PC-9 (cell line): ENCODE measurements at regions of chr11 and their contacts with region 1.

Region 1: DNA sequence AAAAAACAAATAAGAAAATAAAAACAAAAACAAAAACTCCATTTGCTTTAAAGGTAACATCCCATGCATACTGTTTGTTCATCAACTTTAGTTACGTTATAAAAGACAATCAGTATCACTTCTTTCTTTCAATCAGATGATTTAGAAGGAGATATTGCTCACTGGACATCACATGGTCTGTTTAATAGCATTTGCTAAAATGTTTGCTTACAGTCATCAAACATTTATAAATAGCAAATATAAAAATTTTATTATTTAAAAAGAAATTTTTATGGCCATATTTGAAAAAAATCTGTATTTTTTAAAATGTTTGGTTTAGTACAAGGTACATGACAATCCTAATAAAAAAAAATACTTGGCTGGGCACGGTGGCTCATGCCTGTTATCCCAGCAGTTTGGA is 22.6 kb downstream of the MMP26 start:
- DNase-seq: no peak
- H3K4me3 ChIP-seq: no peak overlapping the region
- H3K27ac ChIP-seq: no peak overlapping the region
- H3K4me1 ChIP-seq: no peaks in the 10 kb centered on the region
- H3K27me3 ChIP-seq: 0 out of 2 replicates have a peak, but pooled peaks cover 5% of the 10 kb centered on the region
- CTCF ChIP-seq: no peak

Region 2: GRCh38 chr11:4643076-4643475 is 84.1 kb before region 1 on chr11:
- CTCF ChIA-PET with region 1: no interaction called
- POLR2A ChIA-PET with region 1: no interaction called
- intact Hi-C with region 1: no loop called
- DNase-seq: no peak
- H3K4me3 ChIP-seq: no peak overlapping the region
- H3K27ac ChIP-seq: no peak overlapping the region
- H3K4me1 ChIP-seq: no peaks in the 10 kb centered on the region
- H3K27me3 ChIP-seq: peaks cover 14% of the 10 kb centered on the region
- CTCF ChIP-seq: no peak

Region 3: GRCh38 chr11:4763096-4763495 is 35.9 kb after region 1 on chr11:
- CTCF ChIA-PET with region 1: no interaction called
- POLR2A ChIA-PET with region 1: interaction called, 11 read pairs
- intact Hi-C with region 1: no loop called
- DNase-seq: no peak
- H3K4me3 ChIP-seq: no peak overlapping the region
- H3K27ac ChIP-seq: no peak overlapping the region
- H3K4me1 ChIP-seq: no peaks in the 10 kb centered on the region
- H3K27me3 ChIP-seq: no peaks in the 10 kb centered on the region
- CTCF ChIP-seq: no peak